ENCODE measurements at regions of chr7 and their contacts with region 1.

Region 1: GRCh38 chr7:108442039-108442568 is 14.1 kb downstream of the NRCAM start:
- DNase-seq: peak; percentile 28 to 58
- H3K4me3 ChIP-seq: no peak overlapping the region
- H3K27ac ChIP-seq: no peak overlapping the region
- H3K4me1 ChIP-seq: peaks cover 14% of the 10 kb centered on the region; the same call in 1 of the 2 replicates
- H3K27me3 ChIP-seq: no peaks in the 10 kb centered on the region
- CTCF ChIP-seq: no peak

Region 2: DNA sequence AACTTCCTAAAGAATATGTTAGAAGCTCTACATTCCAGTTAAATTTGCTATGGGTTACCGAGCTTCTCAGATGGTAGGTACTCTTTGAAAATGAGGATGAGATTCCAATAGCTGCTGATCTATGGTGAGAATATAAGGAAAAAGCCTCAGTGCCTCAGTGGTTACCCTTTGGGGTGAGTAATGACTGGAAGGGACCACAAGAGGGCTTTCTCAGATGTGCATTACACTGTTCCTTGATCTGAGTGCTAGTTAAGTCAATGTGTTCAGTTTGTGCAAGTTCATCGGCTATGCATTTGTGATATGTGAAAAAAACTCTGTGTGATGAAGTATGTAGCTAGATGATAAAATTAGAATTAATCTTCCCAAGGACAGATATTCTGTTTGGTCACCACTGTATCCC is 10.6 kb after region 1 on chr7:
- CTCF ChIA-PET with region 1: interaction called, 5 read pairs
- POLR2A ChIA-PET with region 1: interaction called, 14 read pairs
- intact Hi-C with region 1: no loop called
- DNase-seq: no peak
- H3K4me3 ChIP-seq: no peak overlapping the region
- H3K27ac ChIP-seq: no peak overlapping the region
- H3K4me1 ChIP-seq: 0 out of 2 replicates have a peak, but pooled peaks cover 12% of the 10 kb centered on the region
- H3K27me3 ChIP-seq: no peaks in the 10 kb centered on the region
- CTCF ChIP-seq: peak; percentile 66

Measured in PC-9 (cell line).